Uterus (tissue), 4 donors: ENCODE measurements at regions of chr3 and their contacts with region 1.

Region 1: DNA sequence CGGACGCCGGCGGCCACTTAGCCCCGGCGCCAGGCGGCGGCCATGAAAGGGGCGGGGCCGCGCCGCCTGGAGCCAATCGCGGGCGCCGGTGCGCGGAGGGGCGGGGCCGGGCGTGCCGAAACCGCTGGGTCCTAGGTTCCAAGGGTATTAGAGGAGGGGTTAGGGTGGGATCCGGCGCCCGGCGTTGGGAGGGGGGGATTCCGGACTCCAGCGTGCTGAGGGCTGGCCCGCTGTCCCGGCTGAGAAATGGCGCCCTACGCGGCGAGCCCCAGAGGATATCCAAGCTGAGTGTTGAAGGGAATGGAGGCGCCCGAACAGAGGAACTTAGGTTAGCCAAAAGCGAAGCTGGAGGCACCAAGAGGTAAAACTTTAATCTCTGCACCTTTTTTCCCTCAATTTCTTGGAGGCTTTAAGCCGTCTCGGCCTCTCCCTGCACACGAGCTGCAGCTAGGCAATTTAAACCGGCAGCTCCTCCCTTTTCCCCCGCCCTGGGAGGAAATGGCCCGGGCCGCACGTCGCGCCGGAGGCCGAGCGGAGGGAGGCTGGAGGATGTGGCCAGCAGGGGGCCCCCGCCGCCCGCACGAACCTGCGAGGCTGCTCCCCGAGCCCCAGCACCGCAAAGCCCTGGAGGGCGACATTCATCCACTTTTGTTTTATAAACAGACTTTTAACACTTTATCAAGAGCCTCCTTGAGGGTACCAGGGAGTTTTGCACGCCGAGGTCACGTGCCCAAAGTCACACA is at the start of gene XXYLT1:
- DNase-seq: peak; percentile 83 to 90
- H3K4me3 ChIP-seq: peak within 1 kb of the TSS; percentile 70 to 83
- H3K27ac ChIP-seq: peak within 1 kb of the TSS; percentile 84 to 86
- H3K4me1 ChIP-seq: no peaks in the 10 kb centered on the region
- H3K27me3 ChIP-seq: no peaks in the 10 kb centered on the region
- CTCF ChIP-seq: peak; percentile 89 to 97 (median 95)
- POLR2A ChIP-seq: peak in 1 of 2 donors; percentile 3
- total RNA-seq, gene XXYLT1: 10.6 to 52.5 (median 23.8) TPM

Region 2: DNA sequence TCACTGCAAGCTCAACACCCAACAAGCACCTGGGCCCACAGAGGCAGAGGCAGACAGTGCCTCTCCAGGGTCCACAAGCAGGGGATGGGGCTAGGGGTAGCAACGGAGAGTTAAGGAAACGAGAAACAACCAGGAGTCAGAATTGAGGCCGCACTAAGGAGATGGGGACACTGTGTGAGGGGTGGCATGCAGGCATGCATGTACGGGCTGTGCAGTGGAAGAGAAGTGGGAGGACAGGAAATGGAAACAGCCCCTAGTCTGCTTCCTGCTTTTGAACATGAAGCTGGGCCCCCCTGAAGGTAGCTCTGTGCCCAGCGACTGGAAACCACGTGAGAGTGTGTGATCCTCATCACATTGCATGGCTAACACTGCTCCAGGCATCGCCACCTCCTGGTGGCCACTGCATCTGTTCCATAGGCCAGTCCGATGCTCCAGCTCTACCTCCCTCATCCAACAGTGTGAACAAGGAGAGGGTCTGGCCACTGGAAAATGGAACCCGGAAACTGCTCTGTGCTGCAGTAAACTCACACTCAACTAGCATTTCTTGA is 44.3 kb before region 1 on chr3:
- intact Hi-C with region 1: no loop called
- DNase-seq: peak; percentile 14 to 15
- H3K4me3 ChIP-seq: no peak overlapping the region
- H3K27ac ChIP-seq: no peak overlapping the region
- H3K4me1 ChIP-seq: peaks cover 5 to 8% of the 10 kb centered on the region in 2 donors
- H3K27me3 ChIP-seq: no peaks in the 10 kb centered on the region
- CTCF ChIP-seq: peak in 1 of 4 experiments; percentile 10
- POLR2A ChIP-seq: no peak

Region 3: DNA sequence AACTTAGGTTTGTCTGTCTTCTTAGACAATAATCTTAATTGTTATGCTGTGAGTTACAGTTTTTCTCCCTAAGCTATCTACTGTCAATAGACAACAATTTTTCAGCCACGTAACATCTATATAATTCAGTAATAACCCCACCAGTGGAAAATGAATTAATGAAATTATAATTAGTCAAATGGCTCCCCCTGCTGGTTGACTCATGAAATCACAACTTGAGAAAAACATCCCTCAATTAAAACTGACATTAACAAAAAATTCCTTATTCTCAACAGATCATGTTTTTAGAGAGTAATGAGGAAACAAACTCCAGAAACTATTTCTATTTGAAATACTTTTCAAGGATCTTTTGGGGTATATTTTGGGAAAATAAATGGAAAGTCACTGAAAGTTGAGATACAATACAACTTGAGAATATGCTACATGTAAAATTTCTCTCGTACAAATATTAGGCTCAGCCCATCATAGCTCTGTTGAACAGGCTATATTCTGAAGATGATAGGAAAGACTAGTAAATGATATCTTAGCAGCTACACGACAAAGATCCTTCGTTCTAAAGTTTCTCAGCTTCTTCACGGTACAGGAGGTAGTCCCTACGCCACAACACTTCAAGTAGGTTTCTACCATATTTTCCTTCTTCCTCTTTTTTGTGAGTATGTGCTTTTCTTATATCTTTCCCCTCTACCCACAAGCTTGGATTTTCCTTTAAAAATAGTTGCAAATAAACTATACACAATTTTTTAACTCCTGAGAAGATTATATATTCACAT is 251.2 kb after region 1 on chr3:
- intact Hi-C with region 1: loop called (anchors 5 kb)
- DNase-seq: no peak
- H3K4me3 ChIP-seq: no peak overlapping the region
- H3K27ac ChIP-seq: no peak overlapping the region
- H3K4me1 ChIP-seq: no peaks in the 10 kb centered on the region
- H3K27me3 ChIP-seq: no peaks in the 10 kb centered on the region
- CTCF ChIP-seq: peak; percentile 63 to 79 (median 76)
- POLR2A ChIP-seq: no peak